Activated CD4-positive, alpha-beta memory T cell treated with anti-CD3 and anti-CD28 coated beads, Interleukin-2, amount 10 ng/mL, durations not matched to agents 7 days and 5 days (primary cell): ENCODE measurements at regions of chr7 and their contacts with region 1.

Region 1: GRCh38 chr7:12524794-12525386 is 45.6 kb upstream of the SCIN start:
- DNase-seq: no peak
- H3K4me3 Mint-ChIP-seq: no peak overlapping the region
- H3K27ac Mint-ChIP-seq: no peak overlapping the region
- H3K4me1 Mint-ChIP-seq: peaks cover 1% of the 10 kb centered on the region
- H3K27me3 Mint-ChIP-seq: peaks cover 15% of the 10 kb centered on the region

Region 2: GRCh38 chr7:12508554-12508953 is 16.3 kb before region 1 on chr7:
- CTCF ChIA-PET with region 1: no interaction called
- POLR2A ChIA-PET with region 1: no interaction called
- DNase-seq: no peak
- H3K4me3 Mint-ChIP-seq: no peak overlapping the region
- H3K27ac Mint-ChIP-seq: no peak overlapping the region
- H3K4me1 Mint-ChIP-seq: no peaks in the 10 kb centered on the region
- H3K27me3 Mint-ChIP-seq: peaks cover 6% of the 10 kb centered on the region

Region 3: GRCh38 chr7:12557282-12557681 is 32.4 kb after region 1 on chr7:
- CTCF ChIA-PET with region 1: no interaction called
- POLR2A ChIA-PET with region 1: no interaction called
- DNase-seq: no peak
- H3K4me3 Mint-ChIP-seq: no peak overlapping the region
- H3K27ac Mint-ChIP-seq: no peak overlapping the region
- H3K4me1 Mint-ChIP-seq: no peaks in the 10 kb centered on the region
- H3K27me3 Mint-ChIP-seq: no peaks in the 10 kb centered on the region

Region 4: DNA sequence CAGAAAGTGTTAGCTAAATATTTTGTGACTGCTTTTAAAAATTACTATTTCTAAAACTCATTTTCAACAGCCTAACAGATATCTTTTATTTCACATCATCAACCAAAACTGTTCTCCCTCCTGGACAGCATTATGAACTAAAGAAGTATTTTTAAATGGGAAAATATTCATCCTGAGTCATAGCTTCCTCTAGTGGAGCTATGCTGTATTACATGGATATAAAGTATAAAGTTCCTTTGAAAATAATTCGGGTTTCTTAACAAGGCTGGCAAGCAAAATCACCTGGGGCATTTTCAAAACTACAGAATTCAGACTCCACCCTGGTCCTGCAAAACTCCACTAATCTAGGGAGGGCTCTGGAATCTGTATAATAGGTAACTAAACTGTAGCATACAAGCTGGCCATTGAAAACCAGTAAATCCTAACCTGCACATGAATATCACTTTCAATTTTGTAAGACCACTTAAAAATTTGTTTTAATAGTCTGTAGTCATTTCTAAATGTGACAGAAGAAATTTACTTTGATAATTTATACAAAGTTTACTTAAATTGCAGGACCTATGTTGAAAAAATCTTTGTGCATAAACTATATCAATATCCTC is 99.1 kb after region 1 on chr7:
- CTCF ChIA-PET with region 1: interaction called, 16 read pairs
- POLR2A ChIA-PET with region 1: no interaction called
- DNase-seq: no peak
- H3K4me3 Mint-ChIP-seq: no peak overlapping the region
- H3K27ac Mint-ChIP-seq: no peak overlapping the region
- H3K4me1 Mint-ChIP-seq: no peaks in the 10 kb centered on the region
- H3K27me3 Mint-ChIP-seq: peaks cover 13% of the 10 kb centered on the region